ENCODE measurements at regions of chr11 and their contacts with region 1.

Region 1: GRCh38 chr11:44621140-44621681 is 55.7 kb downstream of the CD82 start:
- DNase-seq: no peak
- H3K4me3 ChIP-seq: no peak overlapping the region
- H3K27ac ChIP-seq: no peak overlapping the region
- H3K4me1 ChIP-seq: no peaks in the 10 kb centered on the region
- H3K27me3 ChIP-seq: no peaks in the 10 kb centered on the region
- CTCF ChIP-seq: peak; percentile 83 to 94

Region 2: DNA sequence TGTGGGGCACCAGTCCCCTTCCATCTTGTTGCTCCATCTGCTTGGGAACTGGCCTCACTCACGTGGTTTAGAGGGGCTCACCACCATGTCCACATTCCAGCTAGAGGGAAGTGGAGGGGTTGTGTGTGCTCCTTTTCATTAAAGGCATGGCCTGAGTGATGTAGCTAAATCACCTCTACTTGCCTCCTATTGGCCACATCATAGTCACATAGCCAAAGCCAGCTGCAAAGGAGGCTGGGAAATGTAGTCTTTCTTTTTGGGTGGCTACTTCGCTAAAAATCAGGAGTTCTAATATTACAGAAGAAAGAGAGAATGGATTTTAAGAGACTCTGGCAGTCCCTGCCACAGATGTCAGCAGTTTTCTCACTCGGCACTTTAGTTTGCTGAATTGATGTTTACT is 248.2 kb before region 1 on chr11:
- CTCF ChIA-PET with region 1: no interaction called
- dilution Hi-C with region 1: no loop called
- in situ Hi-C with region 1: no loop called
- intact Hi-C with region 1: no loop called
- DNase-seq: no peak
- H3K4me3 ChIP-seq: no peak overlapping the region
- H3K27ac ChIP-seq: no peak overlapping the region
- H3K4me1 ChIP-seq: no peaks in the 10 kb centered on the region
- H3K27me3 ChIP-seq: peaks cover 3% of the 10 kb centered on the region
- CTCF ChIP-seq: no peak

Region 3: DNA sequence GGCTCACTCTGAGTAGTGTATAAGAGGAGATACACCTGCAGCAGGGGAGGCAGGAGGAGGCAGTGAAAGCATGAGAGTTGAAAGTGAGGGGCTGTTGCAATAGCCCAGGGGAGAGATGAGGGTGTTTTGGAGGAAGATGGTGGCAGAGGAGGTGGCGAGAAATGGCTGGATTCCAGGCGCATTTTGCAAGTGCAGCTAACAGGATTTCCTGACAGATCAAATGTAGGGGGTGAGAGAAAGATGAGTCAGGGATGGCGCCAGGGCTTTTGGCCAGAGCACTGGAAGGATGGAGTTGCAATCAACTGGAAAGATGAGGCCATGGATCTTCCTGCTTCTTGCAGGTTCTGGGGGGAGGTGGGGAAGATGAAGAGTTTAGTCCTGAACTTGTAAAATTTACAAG is 88.8 kb after region 1 on chr11:
- CTCF ChIA-PET with region 1: no interaction called
- dilution Hi-C with region 1: loop called (anchors 10 kb)
- in situ Hi-C with region 1: no loop called
- intact Hi-C with region 1: no loop called
- DNase-seq: no peak
- H3K4me3 ChIP-seq: no peak overlapping the region
- H3K27ac ChIP-seq: no peak overlapping the region
- H3K4me1 ChIP-seq: peaks cover 8% of the 10 kb centered on the region
- H3K27me3 ChIP-seq: peaks cover 3% of the 10 kb centered on the region
- CTCF ChIP-seq: no peak

Region 4: DNA sequence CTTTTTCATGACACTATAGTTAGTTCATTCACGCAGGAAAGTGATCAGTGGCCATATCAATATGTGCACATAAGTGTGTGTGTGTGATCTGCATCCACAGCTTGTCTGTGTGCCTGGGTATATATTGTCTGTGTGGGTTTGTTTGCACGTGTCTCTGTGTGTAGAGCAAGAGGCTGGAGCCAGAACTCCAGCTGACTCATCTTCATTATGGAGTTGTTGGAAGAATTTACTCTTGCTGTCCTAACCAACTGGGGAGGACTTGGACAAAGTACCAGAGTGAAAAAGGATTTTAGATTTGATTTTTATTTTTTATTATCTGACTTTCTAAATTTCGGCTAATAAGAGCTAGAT is 265.6 kb after region 1 on chr11:
- CTCF ChIA-PET with region 1: no interaction called
- dilution Hi-C with region 1: loop called (anchors 25 kb)
- in situ Hi-C with region 1: loop called in 1 of 2 experiments (anchors 10 kb)
- intact Hi-C with region 1: loop called (anchors 1 kb)
- DNase-seq: no peak
- H3K4me3 ChIP-seq: no peak overlapping the region
- H3K27ac ChIP-seq: no peak overlapping the region
- H3K4me1 ChIP-seq: no peaks in the 10 kb centered on the region
- H3K27me3 ChIP-seq: peaks cover 11% of the 10 kb centered on the region
- CTCF ChIP-seq: no peak

Region 5: GRCh38 chr11:44899959-44900358 is 278.7 kb after region 1 on chr11:
- CTCF ChIA-PET with region 1: no interaction called
- dilution Hi-C with region 1: loop called (anchors 25 kb)
- in situ Hi-C with region 1: loop called (anchors 10 kb)
- intact Hi-C with region 1: no loop called
- DNase-seq: peak; percentile 39
- H3K4me3 ChIP-seq: no peak overlapping the region
- H3K27ac ChIP-seq: no peak overlapping the region
- H3K4me1 ChIP-seq: no peaks in the 10 kb centered on the region
- H3K27me3 ChIP-seq: no peaks in the 10 kb centered on the region
- CTCF ChIP-seq: no peak